SK-N-SH (cell line): ENCODE measurements at regions of chr9 and their contacts with region 1.

Region 1: GRCh38 chr9:136944519-136945279 is at the starts of genes C8G and FBXW5:
- DNase-seq: peak; percentile 100
- H3K4me3 ChIP-seq: peak within 1 kb of the TSS; percentile 77 to 94
- H3K27ac ChIP-seq: peak within 1 kb of the TSS; percentile 22 to 86; a peak in 3 of 4 replicates
- H3K4me1 ChIP-seq: peaks cover 0 to 19% of the 10 kb centered on the region in 2 experiments; a peak in 1 of 4 replicates
- H3K27me3 ChIP-seq: no peaks in the 10 kb centered on the region
- CTCF ChIP-seq: peak; percentile 85
- EP300 ChIP-seq: no peak
- RAD21 ChIP-seq: peak; percentile 39; the same call in 1 of the 2 replicates
- polyA plus RNA-seq, gene C8G: 0.28 and 0.49 TPM in 2 replicates
- polyA plus RNA-seq, gene FBXW5: 78.9 and 85.5 TPM in 2 replicates

Region 2: DNA sequence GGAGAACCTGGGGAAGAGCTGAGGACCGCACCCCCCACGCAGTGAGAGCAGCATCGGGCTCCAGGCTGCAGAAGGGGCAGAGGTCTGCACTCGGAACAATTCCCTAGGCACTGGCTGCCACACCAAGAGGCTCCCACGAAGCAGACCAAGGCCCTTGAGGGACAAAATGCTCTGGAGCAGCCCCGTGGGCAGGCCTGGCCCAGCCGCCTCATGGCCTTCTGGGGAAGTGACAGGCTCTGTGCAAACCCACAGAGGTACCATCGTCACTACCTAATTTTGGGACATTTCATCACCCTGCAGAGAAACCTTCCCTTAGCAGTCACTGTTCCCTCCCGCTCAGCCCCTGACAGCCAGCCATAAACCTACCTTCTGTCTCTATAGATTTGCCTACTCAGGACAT is 16.1 kb before region 1 on chr9:
- CTCF ChIA-PET with region 1: interaction called, 19 read pairs
- POLR2A ChIA-PET with region 1: no interaction called
- DNase-seq: no peak
- H3K4me3 ChIP-seq: no peak overlapping the region
- H3K27ac ChIP-seq: no peak overlapping the region
- H3K4me1 ChIP-seq: no peaks in the 10 kb centered on the region; a peak in 1 of 4 replicates
- H3K27me3 ChIP-seq: no peaks in the 10 kb centered on the region
- CTCF ChIP-seq: no peak
- EP300 ChIP-seq: no peak
- RAD21 ChIP-seq: no peak

Region 3: GRCh38 chr9:137129456-137130175 is 184.9 kb after region 1 on chr9:
- CTCF ChIA-PET with region 1: no interaction called
- POLR2A ChIA-PET with region 1: no interaction called
- DNase-seq: peak; percentile 96
- H3K4me3 ChIP-seq: peak overlapping the region; percentile 77 to 89
- H3K27ac ChIP-seq: peak overlapping the region; percentile 56 to 87
- H3K4me1 ChIP-seq: peaks cover 3 to 18% of the 10 kb centered on the region in 2 experiments; a peak in 3 of 4 replicates
- H3K27me3 ChIP-seq: no peaks in the 10 kb centered on the region
- CTCF ChIP-seq: no peak
- EP300 ChIP-seq: no peak
- RAD21 ChIP-seq: no peak

Region 4: GRCh38 chr9:137470785-137471184 is 526.1 kb after region 1 on chr9:
- CTCF ChIA-PET with region 1: no interaction called
- POLR2A ChIA-PET with region 1: no interaction called
- DNase-seq: no peak
- H3K4me3 ChIP-seq: no peak overlapping the region
- H3K27ac ChIP-seq: no peak overlapping the region
- H3K4me1 ChIP-seq: no peaks in the 10 kb centered on the region
- H3K27me3 ChIP-seq: no peaks in the 10 kb centered on the region
- CTCF ChIP-seq: no peak
- EP300 ChIP-seq: no peak
- RAD21 ChIP-seq: no peak